ENCODE measurements at regions of chr2 and their contacts with region 1.

Region 1: DNA sequence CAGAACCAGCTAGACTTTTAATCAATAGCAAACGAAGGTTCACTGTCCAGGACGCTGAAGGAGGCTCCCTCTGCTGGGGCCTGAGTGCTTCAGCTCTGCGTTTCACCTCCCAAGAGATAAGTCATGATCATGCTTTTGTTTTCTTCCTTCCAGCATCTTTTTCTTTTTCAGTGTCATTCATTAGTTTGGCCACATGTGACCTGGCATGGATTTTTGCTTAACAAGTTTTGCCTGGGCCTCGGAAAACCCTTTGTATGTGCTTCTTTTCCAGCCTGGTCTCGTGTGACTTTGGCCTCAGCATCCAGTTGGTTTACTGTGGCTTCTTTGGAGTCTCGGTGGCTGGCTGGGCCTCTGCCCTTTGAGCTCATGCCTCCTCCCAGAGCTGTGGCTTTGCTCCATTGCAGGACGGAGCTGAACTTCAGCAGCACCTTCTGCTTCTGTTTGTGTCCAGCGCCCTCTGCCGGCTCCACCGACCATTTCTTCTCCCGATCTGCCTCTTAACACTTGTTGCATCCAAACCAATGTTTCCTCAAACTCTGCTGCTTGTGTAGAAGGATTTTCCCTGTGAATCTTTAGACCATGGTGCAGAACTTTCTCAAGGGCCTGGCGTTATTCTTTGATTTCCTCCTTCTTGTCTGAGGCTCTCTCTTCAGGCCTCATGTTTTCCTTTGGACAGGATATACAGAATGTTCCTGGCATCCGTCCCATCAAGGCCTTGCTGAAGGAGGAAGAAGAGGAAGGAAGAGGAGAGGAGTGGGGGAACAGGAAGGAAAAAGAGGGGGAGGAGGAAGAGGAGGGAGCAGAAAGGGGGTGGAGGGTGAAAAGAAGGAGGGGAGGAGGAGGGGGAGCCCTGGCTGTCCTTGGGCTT is 23.6 kb upstream of the HES6 start:
- DNase-seq: peak; percentile 83 to 90 (median 86)
- H3K4me3 ChIP-seq: no peak overlapping the region
- H3K27ac ChIP-seq: no peak overlapping the region
- H3K4me1 ChIP-seq: peaks cover 0 to 7% (median 6%) of the 10 kb centered on the region in 4 experiments
- H3K27me3 ChIP-seq: no peaks in the 10 kb centered on the region

Region 2: DNA sequence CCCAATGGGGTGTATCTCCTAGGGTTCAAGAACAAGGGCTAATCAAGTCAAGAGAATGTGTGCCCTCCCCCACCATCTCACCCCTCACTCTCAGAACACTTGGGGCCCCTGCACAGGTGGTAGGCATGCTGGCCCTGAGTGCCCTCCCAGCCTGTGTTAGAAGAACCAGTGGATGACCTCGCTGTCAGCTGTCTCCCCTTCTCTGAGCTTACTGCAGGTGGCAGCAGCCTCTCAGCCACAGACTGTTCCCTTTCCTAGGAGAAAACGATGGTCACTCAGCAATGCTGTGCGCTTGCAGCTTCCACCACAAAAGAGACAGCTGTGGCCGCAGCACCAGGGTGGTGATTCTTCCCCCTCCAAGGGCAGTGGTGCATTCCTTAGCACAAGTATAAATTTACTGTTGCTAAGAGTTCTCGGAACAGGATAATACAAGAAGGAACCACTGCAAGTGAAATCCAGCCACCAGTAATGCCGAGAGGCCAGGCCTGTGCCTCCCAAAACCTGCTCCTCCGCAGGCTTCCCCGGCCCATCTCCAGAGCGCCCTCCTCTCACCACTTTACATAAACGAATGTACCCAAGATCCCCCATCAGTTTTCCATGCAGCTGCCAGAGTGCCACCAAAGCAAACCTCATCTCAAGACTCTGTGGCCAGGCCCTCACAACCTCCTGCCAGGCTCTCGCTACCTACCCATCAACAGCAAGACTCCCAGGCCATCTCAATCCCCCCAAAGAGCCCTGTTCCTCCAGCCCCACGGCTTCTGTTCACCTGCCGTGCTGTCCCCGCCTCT is 404.9 kb before region 1 on chr2:
- CTCF ChIA-PET with region 1: interaction called, 15 read pairs
- POLR2A ChIA-PET with region 1: no interaction called
- DNase-seq: peak; percentile 70 to 81 (median 76)
- H3K4me3 ChIP-seq: peak overlapping the region in 2 of 7 experiments; percentile 75 to 76
- H3K27ac ChIP-seq: no peak overlapping the region
- H3K4me1 ChIP-seq: peaks cover 5 to 38% (median 22%) of the 10 kb centered on the region in 4 experiments
- H3K27me3 ChIP-seq: peaks cover 0 to 20% (median 11%) of the 10 kb centered on the region in 5 experiments

Region 3: DNA sequence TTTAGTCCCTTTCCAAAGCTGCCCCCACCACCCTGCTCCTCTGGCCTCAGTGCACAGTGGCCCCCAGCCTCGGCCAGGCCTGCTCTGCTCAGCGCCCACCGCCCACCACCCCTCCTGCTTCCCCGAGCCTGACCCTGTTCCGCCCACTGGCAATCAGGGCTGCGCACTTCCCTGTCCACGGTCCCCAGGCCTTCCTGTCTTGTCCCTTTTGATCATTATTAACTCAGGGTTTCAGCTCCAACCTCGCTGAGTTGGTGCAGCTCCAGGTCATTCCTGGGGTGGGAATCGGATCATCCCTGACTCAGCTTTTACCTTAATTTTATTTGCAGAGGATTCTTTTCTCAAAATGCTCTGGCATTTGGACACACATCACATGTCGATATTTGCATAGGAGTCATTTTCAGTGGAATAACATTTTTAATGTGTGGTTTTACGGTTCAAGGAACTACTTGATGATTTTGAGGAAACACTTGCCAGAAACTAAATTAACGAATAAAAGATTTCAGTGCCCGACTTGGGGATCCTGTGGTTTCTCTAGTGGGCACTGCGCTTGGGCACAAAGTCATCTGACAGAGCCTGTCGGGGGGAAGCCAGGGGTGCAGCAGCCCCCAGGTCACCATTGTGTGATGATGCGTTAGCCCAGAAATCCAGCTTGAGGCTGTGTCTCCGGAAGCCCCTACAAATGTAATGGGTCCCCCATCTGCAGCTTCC is 164.4 kb before region 1 on chr2:
- CTCF ChIA-PET with region 1: no interaction called
- POLR2A ChIA-PET with region 1: no interaction called
- DNase-seq: peak in 2 of 3 donors; percentile 44 to 53
- H3K4me3 ChIP-seq: no peak overlapping the region
- H3K27ac ChIP-seq: no peak overlapping the region
- H3K4me1 ChIP-seq: peaks cover 3 to 12% (median 9%) of the 10 kb centered on the region in 4 experiments
- H3K27me3 ChIP-seq: no peaks in the 10 kb centered on the region

Region 4: GRCh38 chr2:238158527-238159070 is 104.8 kb before region 1 on chr2 and contains the start of gene ERFE:
- CTCF ChIA-PET with region 1: interaction called, 16 read pairs
- POLR2A ChIA-PET with region 1: interaction called, 4 read pairs
- DNase-seq: peak; percentile 32 to 61 (median 59)
- H3K4me3 ChIP-seq: peak within 1 kb of the TSS in 5 of 7 experiments; percentile 15 to 53 (median 50)
- H3K27ac ChIP-seq: no peak within 1 kb of the TSS
- H3K4me1 ChIP-seq: peaks cover 2 to 22% (median 19%) of the 10 kb centered on the region in 4 experiments
- H3K27me3 ChIP-seq: peaks cover 0 to 50% (median 20%) of the 10 kb centered on the region in 5 experiments

Region 5: GRCh38 chr2:238247002-238247822 is 16.2 kb before region 1 on chr2:
- CTCF ChIA-PET with region 1: interaction called, 12 read pairs
- POLR2A ChIA-PET with region 1: interaction called, 3 read pairs
- DNase-seq: no peak
- H3K4me3 ChIP-seq: no peak overlapping the region
- H3K27ac ChIP-seq: no peak overlapping the region
- H3K4me1 ChIP-seq: no peaks in the 10 kb centered on the region
- H3K27me3 ChIP-seq: peaks cover 0 to 6% (median 0%) of the 10 kb centered on the region in 5 experiments

Region 6: GRCh38 chr2:238274152-238274865 is 10.9 kb after region 1 on chr2:
- CTCF ChIA-PET with region 1: interaction called, 19 read pairs
- POLR2A ChIA-PET with region 1: no interaction called
- DNase-seq: no peak
- H3K4me3 ChIP-seq: no peak overlapping the region
- H3K27ac ChIP-seq: no peak overlapping the region
- H3K4me1 ChIP-seq: no peaks in the 10 kb centered on the region
- H3K27me3 ChIP-seq: no peaks in the 10 kb centered on the region

Region 7: GRCh38 chr2:238426568-238427434 is 163.4 kb after region 1 on chr2 and contains the start of gene ASB1:
- CTCF ChIA-PET with region 1: no interaction called
- POLR2A ChIA-PET with region 1: no interaction called
- DNase-seq: peak; percentile 65 to 76 (median 71)
- H3K4me3 ChIP-seq: peak within 1 kb of the TSS; percentile 72 to 90 (median 84)
- H3K27ac ChIP-seq: peak within 1 kb of the TSS in 1 of 2 experiments; percentile 69
- H3K4me1 ChIP-seq: peaks cover 0 to 22% (median 18%) of the 10 kb centered on the region in 4 experiments
- H3K27me3 ChIP-seq: peaks cover 0 to 6% (median 0%) of the 10 kb centered on the region in 5 experiments